ENCODE measurements at regions of chr2 and their contacts with region 1.

Region 1: GRCh38 chr2:85132834-85133637 is at the start of gene TCF7L1:
- DNase-seq: no peak
- H3K4me3 ChIP-seq: peak within 1 kb of the TSS; percentile 86
- CTCF ChIP-seq: peak; percentile 98

Region 2: DNA sequence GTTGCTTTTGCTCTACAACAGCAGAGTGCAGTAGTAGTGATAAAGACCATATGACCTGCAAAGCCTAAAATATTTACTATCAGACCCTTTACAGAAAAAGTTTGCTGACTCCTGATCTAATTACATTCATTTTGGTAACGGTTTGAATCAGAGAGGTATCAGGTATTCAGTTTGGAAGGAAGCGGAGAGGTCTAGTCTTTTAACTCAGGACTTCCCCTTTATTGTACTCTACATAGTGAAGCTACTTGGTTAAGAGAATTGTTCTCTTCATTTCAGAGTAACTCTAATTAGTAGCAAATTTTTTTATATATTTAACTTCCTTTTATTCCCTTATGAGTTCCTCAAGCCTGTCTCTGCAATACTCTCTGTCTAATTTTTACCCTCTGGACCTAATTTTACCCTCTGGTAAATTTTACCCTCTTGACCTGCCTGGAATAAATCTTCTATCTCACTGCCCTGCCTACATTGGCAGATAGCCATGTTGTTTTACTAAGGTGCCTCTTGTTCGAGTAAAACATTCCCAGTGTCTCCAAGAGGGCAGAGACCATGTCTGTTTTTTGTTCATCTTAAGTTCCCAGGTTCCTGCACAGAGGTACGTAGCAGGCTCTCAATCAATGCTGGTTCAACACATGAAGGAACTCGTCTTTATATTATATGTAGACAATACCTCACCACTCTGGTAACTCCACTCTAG is 446.1 kb before region 1 on chr2:
- CTCF ChIA-PET with region 1: no interaction called
- POLR2A ChIA-PET with region 1: no interaction called
- DNase-seq: no peak
- H3K4me3 ChIP-seq: no peak overlapping the region
- CTCF ChIP-seq: no peak

Region 3: GRCh38 chr2:85066874-85067351 is 66.1 kb before region 1 on chr2:
- CTCF ChIA-PET with region 1: interaction called, 18 read pairs
- POLR2A ChIA-PET with region 1: no interaction called
- DNase-seq: no peak
- H3K4me3 ChIP-seq: no peak overlapping the region
- CTCF ChIP-seq: peak; percentile 81

Region 4: DNA sequence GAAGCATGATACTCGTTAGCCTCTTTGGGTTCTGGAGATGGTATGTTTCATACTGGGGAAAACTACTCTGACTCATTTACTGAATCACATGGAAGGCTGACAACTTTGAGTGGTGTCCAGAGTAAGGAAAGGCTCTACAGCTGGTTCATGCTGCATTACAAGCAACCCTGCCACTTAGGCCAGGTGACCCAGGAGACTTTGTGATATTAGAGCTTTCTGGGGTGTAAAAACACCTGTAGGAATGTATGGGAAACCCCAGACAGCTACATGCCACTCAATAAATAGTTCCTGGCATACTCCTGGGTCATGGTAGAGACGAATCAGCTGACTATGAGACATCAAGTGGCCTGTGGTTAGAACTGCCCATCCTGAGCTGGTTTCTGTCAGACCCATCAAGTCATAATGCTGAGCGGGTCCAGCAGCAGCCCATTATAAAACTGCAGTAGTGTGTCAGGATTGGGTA is 21.2 kb before region 1 on chr2:
- CTCF ChIA-PET with region 1: interaction called, 14 read pairs
- POLR2A ChIA-PET with region 1: no interaction called
- DNase-seq: no peak
- H3K4me3 ChIP-seq: no peak overlapping the region
- CTCF ChIP-seq: no peak

Region 5: DNA sequence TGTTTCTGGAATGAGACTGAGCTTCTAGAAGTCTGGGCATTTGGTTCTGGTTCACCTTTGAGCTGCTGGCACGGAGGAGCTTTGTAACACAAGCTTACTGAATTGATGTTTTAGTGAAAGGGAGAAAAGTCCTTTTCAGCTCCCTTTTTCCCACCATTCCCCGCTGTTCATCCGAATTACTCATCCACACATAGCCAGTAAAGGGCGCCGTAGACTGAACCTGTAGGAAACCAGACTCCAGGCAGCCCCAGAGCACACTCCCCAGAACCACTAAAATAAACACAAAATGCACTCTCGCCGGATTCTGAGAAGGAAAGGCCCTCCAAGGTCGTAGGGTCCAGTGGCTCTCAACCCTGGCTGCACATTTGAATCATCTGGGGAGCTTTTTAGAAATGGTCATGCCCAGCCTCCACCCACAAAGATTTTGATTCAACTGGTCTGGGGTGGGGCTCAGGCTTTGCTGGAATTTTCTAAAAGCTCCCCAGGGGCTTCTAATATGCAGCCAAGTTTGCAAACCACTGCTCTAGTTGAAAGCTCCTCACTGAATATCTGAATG is 29.8 kb after region 1 on chr2:
- CTCF ChIA-PET with region 1: interaction called, 10 read pairs
- POLR2A ChIA-PET with region 1: no interaction called
- DNase-seq: no peak
- H3K4me3 ChIP-seq: no peak overlapping the region
- CTCF ChIP-seq: no peak

Region 6: GRCh38 chr2:85266146-85267041 is 133.4 kb after region 1 on chr2:
- CTCF ChIA-PET with region 1: interaction called, 17 read pairs
- POLR2A ChIA-PET with region 1: interaction called, 4 read pairs
- DNase-seq: no peak
- H3K4me3 ChIP-seq: no peak overlapping the region
- CTCF ChIP-seq: peak; percentile 80

Region 7: GRCh38 chr2:85273738-85274731 is 141.0 kb after region 1 on chr2:
- CTCF ChIA-PET with region 1: interaction called, 14 read pairs
- POLR2A ChIA-PET with region 1: interaction called, 7 read pairs
- DNase-seq: no peak
- H3K4me3 ChIP-seq: no peak overlapping the region
- CTCF ChIP-seq: no peak

Measured in AG04449 (cell line).